ENCODE measurements at regions of chr14 and their contacts with region 1.

Region 1: DNA sequence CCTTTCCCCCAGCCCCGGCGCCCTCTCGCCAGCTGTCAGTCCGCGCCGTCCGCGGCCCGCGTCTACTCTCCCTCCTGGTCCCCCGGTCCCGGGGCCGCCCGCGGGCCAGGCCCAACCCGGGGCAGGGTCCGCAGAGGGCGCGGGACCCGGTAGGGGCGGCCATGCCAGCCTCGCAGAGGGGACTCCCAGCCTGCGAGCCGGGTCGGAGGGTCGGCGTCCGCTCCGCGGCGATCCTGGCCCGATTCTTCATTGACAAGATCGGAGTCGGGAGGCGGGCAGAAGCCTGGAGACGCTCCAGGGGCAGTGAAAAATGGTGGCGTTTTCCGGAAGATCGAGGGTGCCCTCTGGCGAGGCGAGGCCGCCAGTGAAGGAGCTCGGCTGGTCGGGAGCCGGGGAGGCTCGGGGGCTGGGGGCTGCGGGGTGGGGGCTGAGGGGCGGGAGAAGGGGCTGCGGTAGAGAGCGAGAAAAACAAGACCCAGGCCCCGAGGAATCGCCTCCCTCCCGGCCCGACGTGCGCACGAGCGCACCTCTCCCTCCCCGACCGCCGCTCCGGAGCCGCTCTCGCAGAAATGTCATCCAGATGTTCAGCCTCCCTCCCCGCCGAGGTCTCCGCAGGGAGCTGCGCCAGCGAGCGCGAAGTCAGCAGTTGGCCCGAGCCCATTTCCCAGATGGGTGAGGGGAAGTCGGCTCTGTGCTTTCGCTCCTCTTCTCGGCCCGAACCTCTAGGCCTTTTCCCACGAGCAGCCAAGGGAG is 647 bp upstream of the TGFB3 start:
- DNase-seq: peak in 1 of 2 donors; percentile 90
- H3K4me3 ChIP-seq: peak overlapping the region; percentile 67 to 91
- H3K27ac ChIP-seq: peak overlapping the region; percentile 95
- H3K4me1 ChIP-seq: peaks cover 62% of the 10 kb centered on the region
- H3K27me3 ChIP-seq: no peaks in the 10 kb centered on the region
- CTCF ChIP-seq: peak in 1 of 3 experiments; percentile 55
- POLR2A ChIP-seq: no peak

Region 2: DNA sequence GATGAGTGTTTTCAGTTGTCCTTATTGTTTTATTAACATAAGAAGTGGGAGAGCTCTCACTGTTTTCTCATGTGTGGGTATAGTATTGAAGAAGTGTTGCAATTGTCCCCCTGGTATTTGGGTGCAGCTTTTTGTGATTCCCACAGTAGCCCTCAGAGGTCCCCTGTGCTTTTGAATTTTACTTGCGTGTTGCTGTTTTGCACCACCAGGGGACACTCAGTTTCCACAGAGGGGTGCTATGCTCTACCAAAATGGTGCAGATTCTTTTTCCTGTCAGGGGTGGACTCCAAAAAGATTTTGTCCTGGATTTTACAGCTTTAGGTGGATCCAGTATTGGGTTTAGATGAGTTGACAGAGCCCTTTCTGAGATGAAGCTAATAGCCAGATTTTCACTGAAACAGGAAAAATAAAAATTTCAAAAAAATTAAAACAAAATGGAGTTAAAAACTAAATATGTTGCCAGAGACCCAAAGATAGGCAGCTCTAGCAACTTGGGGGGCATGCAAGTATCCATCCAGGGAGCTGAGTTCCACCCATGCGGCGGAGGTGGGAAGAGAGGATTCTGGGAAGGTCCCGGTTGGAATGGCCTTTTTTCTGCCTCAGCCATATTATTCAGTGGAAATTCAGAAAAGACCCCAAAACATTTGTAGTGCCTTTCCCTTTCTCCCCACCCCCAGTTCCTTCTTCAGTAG is 271.2 kb before region 1 on chr14:
- intact Hi-C with region 1: loop called (anchors 5 kb)
- DNase-seq: no peak
- H3K4me3 ChIP-seq: no peak overlapping the region
- H3K27ac ChIP-seq: peak overlapping the region; percentile 81
- H3K4me1 ChIP-seq: peaks cover 28% of the 10 kb centered on the region
- H3K27me3 ChIP-seq: no peaks in the 10 kb centered on the region
- CTCF ChIP-seq: peak in 2 of 3 experiments; percentile 32 to 51
- POLR2A ChIP-seq: no peak

Region 3: DNA sequence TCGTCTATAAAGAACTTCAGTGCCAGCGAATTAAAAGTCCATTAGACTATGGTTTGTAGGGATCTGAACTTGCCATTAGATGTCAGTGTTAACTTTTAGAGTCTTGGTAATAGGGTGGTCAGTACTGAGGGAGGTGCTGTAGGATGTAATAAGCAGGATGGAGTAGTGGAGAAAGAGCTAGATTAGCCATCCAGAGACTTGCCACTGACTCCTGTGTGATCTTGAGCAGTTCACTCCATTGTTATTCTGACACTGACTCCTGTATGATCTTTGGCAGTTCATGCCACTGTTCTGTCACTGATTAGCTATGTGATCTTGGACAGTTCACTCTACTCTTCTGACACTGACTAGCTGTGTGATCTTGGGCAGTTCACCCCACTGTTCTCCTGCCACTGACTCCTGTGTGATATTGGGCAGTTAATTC is 187.8 kb before region 1 on chr14:
- intact Hi-C with region 1: loop called (anchors 10 kb)
- DNase-seq: no peak
- H3K4me3 ChIP-seq: no peak overlapping the region
- H3K27ac ChIP-seq: no peak overlapping the region
- H3K4me1 ChIP-seq: no peaks in the 10 kb centered on the region
- H3K27me3 ChIP-seq: no peaks in the 10 kb centered on the region
- CTCF ChIP-seq: peak in 1 of 3 experiments; percentile 20
- POLR2A ChIP-seq: no peak

Region 4: DNA sequence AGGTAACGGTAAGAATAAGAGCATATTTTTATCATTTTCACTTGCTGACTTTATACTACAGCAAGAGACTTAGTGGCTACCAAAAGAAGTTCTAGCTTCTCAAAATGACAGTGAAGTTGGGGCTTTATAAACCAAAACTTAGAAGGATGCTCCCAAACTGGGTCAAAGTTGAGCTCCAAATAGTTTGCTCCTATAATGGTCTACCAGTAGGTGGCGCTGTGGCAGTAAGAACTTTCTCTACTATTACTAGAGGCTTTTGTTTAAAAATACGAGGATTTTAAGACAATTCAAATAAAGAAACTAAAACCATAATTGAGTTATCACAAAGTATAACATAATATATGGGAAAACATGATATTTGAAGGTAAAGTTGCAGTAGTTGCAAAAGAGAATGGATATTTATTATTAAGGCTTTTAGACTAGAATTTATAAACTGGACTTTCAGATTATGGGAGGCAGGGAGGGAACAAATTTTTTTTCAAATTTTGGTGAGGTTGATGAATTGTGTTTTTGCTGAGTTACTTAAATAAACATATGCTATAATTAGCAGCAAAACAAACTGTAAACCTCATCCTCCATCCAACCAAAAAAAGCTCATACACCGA is 75.7 kb before region 1 on chr14:
- intact Hi-C with region 1: loop called (anchors 10 kb)
- DNase-seq: no peak
- H3K4me3 ChIP-seq: no peak overlapping the region
- H3K27ac ChIP-seq: no peak overlapping the region
- H3K4me1 ChIP-seq: no peaks in the 10 kb centered on the region
- H3K27me3 ChIP-seq: no peaks in the 10 kb centered on the region
- CTCF ChIP-seq: peak; percentile 58 to 79 (median 69)
- POLR2A ChIP-seq: no peak

Measured in vagina (tissue), 2 donors.